ENCODE measurements at regions of chr1 and their contacts with region 1.

Region 1: DNA sequence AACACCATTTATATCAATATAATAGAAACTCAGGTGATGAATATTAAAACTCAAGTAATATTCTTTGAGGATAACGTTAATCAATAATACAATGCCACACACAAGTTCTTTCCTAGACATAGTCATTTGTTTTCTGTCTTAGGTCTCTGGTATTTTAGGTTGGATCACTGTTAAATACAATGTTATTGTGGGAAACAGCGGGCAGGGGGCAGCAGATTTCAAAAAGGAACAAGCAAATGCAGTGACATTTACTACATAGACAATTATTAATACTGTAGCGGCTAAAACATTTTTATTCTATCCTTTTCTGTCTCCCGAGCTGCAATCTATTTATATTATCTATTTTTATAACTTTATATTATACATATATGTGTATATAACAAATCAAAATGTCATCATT is 186.4 kb upstream of the ZNHIT6 start:
- DNase-seq: peak; percentile 56
- H3K4me3 ChIP-seq: no peak overlapping the region
- H3K27ac ChIP-seq: no peak overlapping the region
- H3K4me1 ChIP-seq: no peaks in the 10 kb centered on the region
- H3K27me3 ChIP-seq: peaks cover 0 to 3% of the 10 kb centered on the region in 2 experiments
- CTCF ChIP-seq: peak in 1 of 2 donors; percentile 42
- POLR2A ChIP-seq: no peak

Region 2: GRCh38 chr1:85911742-85912141 is 17.1 kb after region 1 on chr1:
- CTCF ChIA-PET with region 1: interaction called, 11 read pairs
- POLR2A ChIA-PET with region 1: no interaction called
- dilution Hi-C with region 1: no loop called
- intact Hi-C with region 1: no loop called
- DNase-seq: peak; percentile 9
- H3K4me3 ChIP-seq: no peak overlapping the region
- H3K27ac ChIP-seq: no peak overlapping the region
- H3K4me1 ChIP-seq: no peaks in the 10 kb centered on the region
- H3K27me3 ChIP-seq: peaks cover 1 to 30% of the 10 kb centered on the region in 2 experiments
- CTCF ChIP-seq: peak in 1 of 2 donors; percentile 24
- POLR2A ChIP-seq: no peak

Region 3: DNA sequence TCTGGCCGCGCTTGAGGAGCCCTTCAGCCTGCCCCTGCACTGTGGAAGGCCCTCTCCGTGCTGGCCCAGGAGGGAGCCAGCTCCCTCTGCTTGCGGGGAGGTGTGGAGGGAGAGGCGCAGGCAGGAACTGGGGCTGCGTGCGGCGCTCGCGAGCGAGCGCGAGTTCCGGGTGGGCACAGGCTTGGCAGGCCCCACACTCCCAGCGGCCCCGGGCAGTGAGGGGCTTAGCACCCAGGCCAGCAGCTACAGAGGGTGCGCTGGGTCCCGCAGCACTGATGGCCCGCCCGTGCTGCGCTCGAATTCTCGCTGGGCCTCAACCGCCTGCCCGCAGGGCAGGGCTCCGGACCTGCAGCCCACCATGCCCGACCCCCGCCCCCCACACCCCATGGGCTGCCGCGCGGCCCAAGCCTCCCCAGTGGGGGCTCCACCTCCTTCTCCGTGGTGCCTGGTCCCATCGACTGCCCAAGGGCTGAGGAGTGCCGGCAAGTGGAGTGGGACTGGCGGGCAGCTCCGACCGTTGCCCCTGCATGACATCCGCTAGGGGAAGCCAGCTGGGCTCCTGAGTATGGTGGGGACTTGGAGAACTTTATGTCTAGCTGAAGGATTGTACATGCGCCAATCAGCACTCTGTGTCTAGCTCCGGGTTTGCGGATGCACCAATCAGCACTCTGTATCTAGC is 215.9 kb after region 1 on chr1:
- CTCF ChIA-PET with region 1: no interaction called
- POLR2A ChIA-PET with region 1: no interaction called
- dilution Hi-C with region 1: no loop called
- intact Hi-C with region 1: no loop called
- DNase-seq: no peak
- H3K4me3 ChIP-seq: no peak overlapping the region
- H3K27ac ChIP-seq: no peak overlapping the region
- H3K4me1 ChIP-seq: no peaks in the 10 kb centered on the region
- H3K27me3 ChIP-seq: peaks cover 0 to 2% of the 10 kb centered on the region in 2 experiments
- CTCF ChIP-seq: no peak
- POLR2A ChIP-seq: no peak

Region 4: GRCh38 chr1:86395771-86396497 is 501.3 kb after region 1 on chr1 and contains the start of gene ODF2L:
- CTCF ChIA-PET with region 1: no interaction called
- POLR2A ChIA-PET with region 1: no interaction called
- dilution Hi-C with region 1: no loop called
- intact Hi-C with region 1: no loop called
- DNase-seq: peak; percentile 90
- H3K4me3 ChIP-seq: peak within 1 kb of the TSS; percentile 85 to 96 (median 85)
- H3K27ac ChIP-seq: peak within 1 kb of the TSS; percentile 72
- H3K4me1 ChIP-seq: peaks cover 28% of the 10 kb centered on the region
- H3K27me3 ChIP-seq: peaks cover 0 to 2% of the 10 kb centered on the region in 2 experiments
- CTCF ChIP-seq: no peak
- POLR2A ChIP-seq: peak; percentile 57
- total RNA-seq, gene ODF2L: 74.7 and 86.3 TPM in 2 replicates